ENCODE measurements at regions of chr9 and their contacts with region 1.

Region 1: GRCh38 chr9:89984214-89984613 is 379.4 kb downstream of the GADD45G start:
- DNase-seq: no peak
- H3K4me3 Mint-ChIP-seq: peak overlapping the region; percentile 61
- H3K27ac Mint-ChIP-seq: peak overlapping the region; percentile 93
- H3K4me1 Mint-ChIP-seq: peaks cover 67% of the 10 kb centered on the region
- H3K27me3 Mint-ChIP-seq: peaks cover 2% of the 10 kb centered on the region

Region 2: DNA sequence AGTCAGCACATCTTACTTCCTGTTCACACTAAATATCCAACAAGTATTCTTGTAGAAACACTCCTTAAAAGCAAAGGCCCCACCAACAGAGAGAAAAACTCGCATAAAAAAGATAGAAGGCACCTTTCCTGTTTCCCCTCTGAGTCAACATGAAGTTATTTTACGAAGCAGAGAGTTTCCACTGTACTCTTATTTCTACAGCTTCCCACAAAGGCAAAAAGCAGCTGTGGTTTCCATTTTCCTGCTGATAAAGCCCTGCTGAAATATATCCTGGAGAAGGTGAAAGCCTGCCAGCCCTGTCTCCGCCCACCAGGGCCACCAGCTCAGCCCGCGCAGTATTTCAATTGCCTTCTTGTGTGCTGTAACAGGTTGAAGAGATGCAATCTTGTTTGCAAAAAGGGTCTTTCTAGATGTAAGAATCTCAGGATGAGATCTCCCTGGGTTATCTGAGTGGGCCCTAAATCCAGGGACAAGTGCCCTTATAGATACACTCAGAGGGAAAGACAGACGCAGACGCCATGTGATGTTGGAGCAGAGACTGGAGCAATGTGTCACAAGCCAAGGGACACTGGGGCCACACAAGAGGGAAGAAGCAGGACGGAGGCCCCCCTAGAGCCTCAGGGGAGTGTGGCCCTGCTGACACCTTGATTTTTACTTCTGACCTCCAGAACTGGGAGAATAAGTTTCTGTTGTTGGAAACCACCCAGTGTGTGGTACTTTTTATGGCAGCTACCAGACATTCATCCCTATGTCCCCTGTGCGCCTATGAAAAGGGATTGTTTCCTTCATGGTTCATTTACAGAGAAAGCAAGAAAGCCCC is 506.2 kb before region 1 on chr9:
- intact Hi-C with region 1: loop called (anchors 5 kb)
- DNase-seq: peak; percentile 47
- H3K4me3 Mint-ChIP-seq: peak overlapping the region; percentile 89
- H3K27ac Mint-ChIP-seq: peak overlapping the region; percentile 96
- H3K4me1 Mint-ChIP-seq: peaks cover 90% of the 10 kb centered on the region
- H3K27me3 Mint-ChIP-seq: no peaks in the 10 kb centered on the region

Region 3: DNA sequence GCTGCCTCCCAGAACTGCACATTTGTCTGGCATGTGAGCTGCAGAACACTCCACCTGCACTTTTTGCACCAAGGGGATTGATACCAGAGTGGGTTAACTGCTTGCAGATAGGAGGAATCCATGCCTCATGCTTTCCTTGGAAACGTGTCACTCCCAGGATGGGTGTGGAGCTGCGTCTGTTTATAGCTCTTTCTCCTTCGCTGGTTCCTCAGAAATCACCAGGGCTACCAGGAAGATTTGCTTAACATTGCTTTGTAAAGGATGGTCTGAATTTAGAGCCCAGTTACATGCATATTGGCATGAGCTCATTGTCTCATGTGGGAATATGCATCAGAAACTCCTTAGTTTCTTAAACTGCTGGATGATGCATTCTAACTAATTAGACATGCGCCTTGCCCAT is 144.8 kb before region 1 on chr9:
- intact Hi-C with region 1: no loop called
- DNase-seq: no peak
- H3K4me3 Mint-ChIP-seq: no peak overlapping the region
- H3K27ac Mint-ChIP-seq: no peak overlapping the region
- H3K4me1 Mint-ChIP-seq: peaks cover 6% of the 10 kb centered on the region
- H3K27me3 Mint-ChIP-seq: peaks cover 15% of the 10 kb centered on the region

Region 4: GRCh38 chr9:89919169-89919681 is 65.0 kb before region 1 on chr9:
- intact Hi-C with region 1: loop called (anchors 1 kb)
- DNase-seq: peak; percentile 41
- H3K4me3 Mint-ChIP-seq: peak overlapping the region; percentile 16
- H3K27ac Mint-ChIP-seq: no peak overlapping the region
- H3K4me1 Mint-ChIP-seq: peaks cover 51% of the 10 kb centered on the region
- H3K27me3 Mint-ChIP-seq: peaks cover 2% of the 10 kb centered on the region

Region 5: GRCh38 chr9:89969156-89969675 is 15.0 kb before region 1 on chr9:
- intact Hi-C with region 1: loop called (anchors 1 kb)
- DNase-seq: no peak
- H3K4me3 Mint-ChIP-seq: peak overlapping the region; percentile 15
- H3K27ac Mint-ChIP-seq: peak overlapping the region; percentile 55
- H3K4me1 Mint-ChIP-seq: peaks cover 59% of the 10 kb centered on the region
- H3K27me3 Mint-ChIP-seq: no peaks in the 10 kb centered on the region

Region 6: DNA sequence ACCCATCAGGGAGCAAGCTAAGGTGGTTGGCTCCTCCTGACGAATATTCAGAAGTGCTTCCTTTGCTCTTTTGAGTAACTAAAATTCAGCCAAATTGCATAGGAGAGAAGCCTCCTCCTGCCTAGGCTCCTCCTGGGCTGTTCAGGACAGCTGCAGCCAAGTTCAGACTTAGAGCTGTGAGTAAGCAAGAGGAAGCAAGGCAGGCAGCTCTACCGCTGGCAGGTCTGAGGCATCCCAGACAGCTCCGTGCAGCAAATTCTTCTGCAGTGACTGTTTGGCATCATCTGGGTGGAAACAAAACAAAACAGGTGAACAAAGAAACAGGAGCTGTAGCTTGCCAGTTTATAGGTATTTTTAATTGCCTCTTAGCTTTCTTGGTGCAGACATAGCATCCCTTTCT is 41.6 kb after region 1 on chr9:
- intact Hi-C with region 1: no loop called
- DNase-seq: no peak
- H3K4me3 Mint-ChIP-seq: no peak overlapping the region
- H3K27ac Mint-ChIP-seq: no peak overlapping the region
- H3K4me1 Mint-ChIP-seq: no peaks in the 10 kb centered on the region
- H3K27me3 Mint-ChIP-seq: peaks cover 15% of the 10 kb centered on the region

Region 7: GRCh38 chr9:90044710-90045151 is 60.5 kb after region 1 on chr9:
- intact Hi-C with region 1: loop called (anchors 1 kb)
- DNase-seq: peak; percentile 9
- H3K4me3 Mint-ChIP-seq: no peak overlapping the region
- H3K27ac Mint-ChIP-seq: peak overlapping the region; percentile 86
- H3K4me1 Mint-ChIP-seq: peaks cover 29% of the 10 kb centered on the region
- H3K27me3 Mint-ChIP-seq: no peaks in the 10 kb centered on the region

Region 8: GRCh38 chr9:90393365-90394150 is 409.3 kb after region 1 on chr9:
- intact Hi-C with region 1: no loop called
- DNase-seq: no peak
- H3K4me3 Mint-ChIP-seq: no peak overlapping the region
- H3K27ac Mint-ChIP-seq: no peak overlapping the region
- H3K4me1 Mint-ChIP-seq: no peaks in the 10 kb centered on the region
- H3K27me3 Mint-ChIP-seq: peaks cover 12% of the 10 kb centered on the region